ENCODE measurements at regions of chr15 and their contacts with region 1.

Region 1: GRCh38 chr15:73781038-73781925 is 28.1 kb upstream of the INSYN1 start:
- DNase-seq: no peak
- ATAC-seq: peak in 2 of 4 donors; percentile 10 to 40
- H3K4me3 ChIP-seq: no peak overlapping the region
- H3K27ac ChIP-seq: no peak overlapping the region
- H3K4me1 ChIP-seq: peaks cover 0 to 8% (median 0%) of the 10 kb centered on the region in 12 donors
- H3K27me3 ChIP-seq: no peaks in the 10 kb centered on the region
- CTCF ChIP-seq: peak in 7 of 12 donors; percentile 7 to 26 (median 11)
- POLR2A ChIP-seq: no peak

Region 2: DNA sequence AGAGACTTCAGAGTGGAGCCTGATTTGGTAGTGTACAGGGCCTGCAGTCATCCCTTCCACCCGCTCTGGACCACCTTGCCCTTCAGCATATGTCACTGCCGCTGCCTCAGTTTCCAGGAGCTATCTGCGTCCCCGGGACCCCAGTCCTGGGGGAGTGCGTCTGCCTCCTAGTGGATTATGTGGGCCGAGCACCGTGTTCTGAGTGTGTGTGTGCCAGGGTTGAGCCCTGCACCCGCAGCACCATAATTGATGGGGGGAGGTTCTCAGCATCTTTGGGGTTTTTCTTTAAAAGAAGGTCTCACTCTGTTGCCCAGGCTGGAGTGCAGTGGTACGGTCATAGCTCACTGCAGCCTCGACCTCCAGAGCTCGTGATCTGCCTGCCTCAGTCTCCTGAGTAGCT is 63.5 kb before region 1 on chr15:
- intact Hi-C with region 1: no loop called
- DNase-seq: no peak
- ATAC-seq: no peak
- H3K4me3 ChIP-seq: no peak overlapping the region
- H3K27ac ChIP-seq: no peak overlapping the region
- H3K4me1 ChIP-seq: peaks cover 0 to 22% (median 0%) of the 10 kb centered on the region in 12 donors
- H3K27me3 ChIP-seq: no peaks in the 10 kb centered on the region
- CTCF ChIP-seq: peak in 2 of 12 donors; percentile 10 to 22
- POLR2A ChIP-seq: no peak

Region 3: GRCh38 chr15:73914145-73914544 is 132.9 kb after region 1 on chr15:
- intact Hi-C with region 1: loop called in 1 of 10 experiments (anchors 10 kb)
- DNase-seq: no peak
- ATAC-seq: peak in 1 of 4 donors; percentile 28
- H3K4me3 ChIP-seq: no peak overlapping the region
- H3K27ac ChIP-seq: no peak overlapping the region
- H3K4me1 ChIP-seq: peaks cover 0 to 9% (median 0%) of the 10 kb centered on the region in 12 donors
- H3K27me3 ChIP-seq: no peaks in the 10 kb centered on the region
- CTCF ChIP-seq: no peak
- POLR2A ChIP-seq: no peak